Activated CD8-positive, alpha-beta T cell treated with anti-CD3 and anti-CD28 coated beads for 36 hours (primary cell): ENCODE measurements at regions of chr6 and their contacts with region 1.

Region 1: DNA sequence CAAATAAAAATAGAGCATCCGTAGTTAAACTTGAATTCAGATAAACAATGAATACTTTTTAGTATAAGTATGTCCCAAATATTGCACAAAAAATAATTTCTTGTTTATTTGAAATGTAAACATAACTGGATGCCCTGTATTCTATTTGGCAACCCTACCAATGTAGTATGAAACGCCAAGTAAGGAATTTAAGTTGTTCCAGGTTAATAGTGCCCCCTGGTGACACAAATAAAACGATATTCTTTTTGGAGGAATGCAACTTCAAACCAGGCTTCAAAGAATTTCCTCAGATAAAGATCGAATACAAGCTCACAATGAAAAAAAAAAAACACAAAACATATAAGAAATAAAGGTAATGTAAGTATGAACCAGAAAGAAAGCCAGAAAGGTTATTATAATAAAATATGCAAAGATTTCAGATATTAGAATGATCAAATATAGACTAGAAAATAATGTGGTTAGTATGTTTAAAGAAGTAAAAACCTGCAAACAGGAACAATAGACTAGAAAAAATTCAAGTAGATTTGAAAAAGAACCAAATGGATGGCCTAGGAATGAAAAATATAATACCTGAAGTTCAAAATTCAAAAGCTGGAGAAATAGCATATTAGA is 18.4 kb upstream of the AKAP7 start:
- DNase-seq: no peak
- ATAC-seq: no peak
- H3K4me3 Mint-ChIP-seq: no peak overlapping the region
- H3K27ac Mint-ChIP-seq: no peak overlapping the region
- H3K4me1 Mint-ChIP-seq: no peaks in the 10 kb centered on the region
- H3K27me3 Mint-ChIP-seq: peaks cover 1% of the 10 kb centered on the region
- CTCF ChIP-seq: peak; percentile 72

Region 2: GRCh38 chr6:130893277-130893676 is 223.6 kb before region 1 on chr6:
- CTCF ChIA-PET with region 1: interaction called, 117 read pairs
- POLR2A ChIA-PET with region 1: interaction called, 3 read pairs
- intact Hi-C with region 1: no loop called
- DNase-seq: no peak
- ATAC-seq: no peak
- H3K4me3 Mint-ChIP-seq: no peak overlapping the region
- H3K27ac Mint-ChIP-seq: no peak overlapping the region
- H3K4me1 Mint-ChIP-seq: no peaks in the 10 kb centered on the region
- H3K27me3 Mint-ChIP-seq: no peaks in the 10 kb centered on the region
- CTCF ChIP-seq: no peak

Region 3: GRCh38 chr6:131134980-131135243 is 18.1 kb after region 1 on chr6:
- CTCF ChIA-PET with region 1: interaction called, 14 read pairs
- POLR2A ChIA-PET with region 1: no interaction called
- intact Hi-C with region 1: no loop called
- DNase-seq: no peak
- ATAC-seq: no peak
- H3K4me3 Mint-ChIP-seq: peak overlapping the region; percentile 83
- H3K27ac Mint-ChIP-seq: peak overlapping the region; percentile 88
- H3K4me1 Mint-ChIP-seq: peaks cover 9% of the 10 kb centered on the region
- H3K27me3 Mint-ChIP-seq: no peaks in the 10 kb centered on the region
- CTCF ChIP-seq: no peak